Uterus (tissue), 4 donors: ENCODE measurements at regions of chr5 and their contacts with region 1.

Region 1: GRCh38 chr5:35089334-35090314 is 41.9 kb upstream of the AGXT2 start:
- DNase-seq: peak; percentile 57 to 62
- H3K4me3 ChIP-seq: no peak overlapping the region
- H3K27ac ChIP-seq: peak overlapping the region in 1 of 2 donors; percentile 38
- H3K4me1 ChIP-seq: peaks cover 0 to 5% of the 10 kb centered on the region in 2 donors
- H3K27me3 ChIP-seq: no peaks in the 10 kb centered on the region
- CTCF ChIP-seq: peak; percentile 61 to 73 (median 70)
- POLR2A ChIP-seq: no peak

Region 2: DNA sequence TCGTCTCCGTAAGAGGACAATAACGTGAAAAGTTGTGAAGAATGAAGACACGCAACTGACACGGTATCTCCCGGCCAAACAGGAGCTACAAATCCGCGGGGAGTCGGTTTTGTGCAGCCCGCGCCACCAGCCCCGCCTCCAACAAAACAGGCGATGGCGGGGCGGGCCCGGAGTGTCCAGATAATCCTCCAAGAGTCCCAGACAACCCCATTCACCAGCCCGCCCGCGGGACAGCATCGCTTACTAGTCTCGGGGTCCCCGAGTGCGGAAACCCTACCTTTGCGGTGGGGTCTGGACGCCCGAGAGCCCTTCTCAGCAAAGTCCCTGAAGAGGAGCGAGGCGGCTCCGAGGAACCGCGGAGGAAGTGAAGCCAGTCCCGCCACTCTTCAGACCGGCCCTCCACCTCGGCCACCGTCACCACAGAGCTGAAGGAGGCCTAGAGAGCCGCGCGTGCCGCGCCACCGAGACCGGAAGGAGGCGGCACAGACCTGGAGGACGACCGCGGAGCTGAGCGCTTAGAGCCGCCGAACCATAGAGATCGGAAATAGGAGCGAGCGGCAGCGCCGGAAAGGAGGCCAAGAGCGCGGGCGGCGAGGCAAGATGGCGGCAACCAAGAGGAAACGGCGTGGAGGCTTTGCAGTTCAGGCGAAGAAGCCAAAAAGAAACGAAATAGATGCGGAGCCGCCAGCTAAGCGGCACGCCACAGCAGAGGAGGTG is 174.3 kb before region 1 on chr5 and contains the starts of genes BRIX1 and RAD1:
- intact Hi-C with region 1: no loop called
- DNase-seq: peak; percentile 94 to 96
- H3K4me3 ChIP-seq: peak within 1 kb of the TSS; percentile 60 to 99
- H3K27ac ChIP-seq: peak within 1 kb of the TSS; percentile 83 to 89
- H3K4me1 ChIP-seq: peaks cover 7 to 10% of the 10 kb centered on the region in 2 donors
- H3K27me3 ChIP-seq: no peaks in the 10 kb centered on the region
- CTCF ChIP-seq: peak; percentile 30 to 58 (median 50)
- POLR2A ChIP-seq: peak; percentile 49 to 62
- total RNA-seq, gene BRIX1: 6.4 to 46.0 (median 28.6) TPM
- total RNA-seq, gene RAD1: 5.1 to 36.2 (median 25.0) TPM

Region 3: DNA sequence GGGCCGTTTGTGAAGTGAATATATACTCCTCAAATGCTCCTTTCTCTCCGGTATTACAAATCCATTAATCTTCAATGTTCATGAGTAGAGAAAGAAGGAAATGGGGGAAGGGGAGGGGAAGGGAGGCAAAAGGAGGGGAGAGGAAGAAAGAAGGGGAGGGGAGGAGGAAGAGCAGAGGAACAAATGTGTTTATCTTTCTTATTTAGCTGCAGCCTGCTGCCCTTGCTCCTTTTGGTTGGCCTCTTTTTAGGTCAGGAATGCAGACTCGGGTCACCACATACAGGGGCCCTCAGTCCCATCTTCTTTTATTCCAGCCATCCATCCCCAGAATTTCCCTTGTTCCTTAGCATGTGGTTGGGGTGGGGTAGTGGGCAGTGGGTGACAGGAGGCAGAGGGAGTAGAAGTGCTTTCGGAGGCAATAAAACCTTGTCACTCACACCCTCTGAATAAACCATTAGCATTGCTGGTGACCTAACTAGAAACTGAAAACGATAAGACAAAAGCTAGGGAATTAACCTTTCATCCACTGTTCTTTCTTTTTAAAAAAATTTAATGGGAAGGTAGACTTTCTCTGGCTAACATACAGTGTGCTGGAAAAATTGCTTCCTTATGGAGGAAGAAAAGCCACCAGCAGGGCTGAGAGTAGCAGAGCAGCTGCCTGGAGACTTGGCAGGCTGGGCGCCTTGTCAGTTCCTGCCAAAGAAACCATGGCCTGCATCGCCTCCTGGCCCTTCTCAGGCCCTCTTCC is 157.4 kb after region 1 on chr5:
- intact Hi-C with region 1: no loop called
- DNase-seq: peak; percentile 57 to 64
- H3K4me3 ChIP-seq: no peak overlapping the region
- H3K27ac ChIP-seq: peak overlapping the region; percentile 54 to 73
- H3K4me1 ChIP-seq: peaks cover 0 to 6% of the 10 kb centered on the region in 2 donors
- H3K27me3 ChIP-seq: no peaks in the 10 kb centered on the region
- CTCF ChIP-seq: no peak
- POLR2A ChIP-seq: no peak

Region 4: DNA sequence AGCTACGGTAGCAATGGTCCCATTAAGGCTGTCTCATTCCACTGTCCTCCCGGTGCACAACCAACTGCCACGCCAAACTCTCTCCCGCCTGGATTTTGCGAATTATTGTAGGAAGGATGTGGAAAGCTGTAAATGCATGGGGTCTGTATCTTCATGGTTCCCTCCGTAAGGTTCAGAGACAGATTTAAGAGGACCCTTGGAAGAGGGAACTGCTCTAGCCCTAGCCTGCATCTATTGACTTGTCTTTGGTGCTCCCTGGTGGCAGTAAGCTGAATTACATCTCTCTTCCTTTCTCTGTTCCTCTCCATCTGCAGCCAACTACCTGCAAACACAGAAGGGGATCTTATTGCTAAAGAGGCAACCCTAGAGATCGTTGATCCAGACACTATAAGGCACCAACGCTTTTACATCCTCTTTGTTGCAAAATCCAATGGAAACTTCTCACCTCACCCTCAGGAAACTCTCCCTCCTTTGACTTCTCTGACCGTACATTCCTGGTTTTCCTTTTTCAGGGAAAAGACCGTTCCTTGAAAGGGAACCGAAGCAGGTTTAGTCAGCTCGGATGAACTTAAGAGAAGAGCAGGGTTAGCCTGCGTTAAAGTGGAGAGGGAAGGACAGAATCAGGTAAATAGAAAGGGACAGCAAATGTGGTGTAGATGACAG is 836.9 kb after region 1 on chr5:
- intact Hi-C with region 1: loop called (anchors 5 kb)
- DNase-seq: peak; percentile 26 to 64
- H3K4me3 ChIP-seq: no peak overlapping the region
- H3K27ac ChIP-seq: no peak overlapping the region
- H3K4me1 ChIP-seq: peaks cover 0 to 3% of the 10 kb centered on the region in 2 donors
- H3K27me3 ChIP-seq: no peaks in the 10 kb centered on the region
- CTCF ChIP-seq: peak; percentile 67 to 86 (median 80)
- POLR2A ChIP-seq: no peak